ENCODE measurements at regions of chr1 and their contacts with region 1.

Region 1: GRCh38 chr1:230839173-230839572 is 29.1 kb downstream of the C1orf198 start:
- DNase-seq: no peak
- ATAC-seq: no peak

Region 2: DNA sequence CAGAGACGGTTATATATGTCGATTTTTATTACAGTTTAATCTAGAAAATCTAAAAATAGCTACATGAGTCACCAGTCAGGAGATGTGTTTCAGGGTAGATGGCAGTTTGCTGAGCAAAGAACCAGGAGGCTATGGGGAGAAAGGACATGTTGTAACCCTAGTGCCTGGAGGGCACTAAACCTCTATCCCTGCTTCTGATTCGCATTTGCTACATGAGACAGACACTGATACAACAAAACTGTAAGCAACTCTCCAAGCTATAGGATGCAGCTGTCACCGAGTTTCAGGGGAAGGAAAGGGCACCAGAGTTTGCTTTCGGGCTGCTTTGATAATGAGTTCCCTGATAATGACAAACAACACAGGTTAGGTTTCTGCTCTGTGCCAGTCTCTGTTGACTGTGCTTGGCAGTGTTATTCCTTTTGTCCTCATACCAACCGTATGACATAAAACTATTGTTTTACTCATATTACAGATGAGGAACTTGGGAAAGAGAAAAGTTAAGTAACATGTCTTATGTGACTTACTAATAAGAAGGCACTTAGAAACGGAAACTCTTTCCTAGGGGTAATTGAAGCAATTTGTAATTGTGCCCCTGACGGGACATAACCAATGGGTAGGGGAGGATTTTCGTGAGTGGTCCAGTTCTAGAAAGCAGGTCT is 14.0 kb before region 1 on chr1:
- intact Hi-C with region 1: loop called (anchors 1 kb)
- DNase-seq: no peak
- ATAC-seq: peak; percentile 55

Region 3: DNA sequence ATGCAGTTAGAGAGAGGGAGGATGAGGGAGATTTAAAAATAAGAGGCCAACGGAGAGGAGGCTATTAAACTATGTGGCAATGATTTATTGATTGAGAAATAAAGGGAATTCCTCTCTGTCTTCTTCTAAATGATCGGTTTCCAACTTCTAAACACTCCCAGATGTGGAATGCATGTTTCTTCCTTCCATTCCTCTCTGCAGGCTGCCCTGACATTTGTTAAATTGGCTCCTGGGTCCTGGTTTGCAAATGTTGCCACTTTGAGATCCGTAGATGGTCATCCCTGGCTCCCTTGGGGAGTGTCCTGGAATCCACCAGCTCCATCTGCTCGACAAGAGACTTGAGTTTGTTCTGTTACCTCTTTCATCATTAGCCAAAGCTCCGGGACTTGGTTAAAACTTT is 39.4 kb after region 1 on chr1:
- intact Hi-C with region 1: loop called (anchors 5 kb)
- DNase-seq: no peak
- ATAC-seq: peak; percentile 45

Region 4: GRCh38 chr1:230922620-230923019 is 83.4 kb after region 1 on chr1:
- intact Hi-C with region 1: no loop called
- DNase-seq: no peak
- ATAC-seq: no peak

Region 5: DNA sequence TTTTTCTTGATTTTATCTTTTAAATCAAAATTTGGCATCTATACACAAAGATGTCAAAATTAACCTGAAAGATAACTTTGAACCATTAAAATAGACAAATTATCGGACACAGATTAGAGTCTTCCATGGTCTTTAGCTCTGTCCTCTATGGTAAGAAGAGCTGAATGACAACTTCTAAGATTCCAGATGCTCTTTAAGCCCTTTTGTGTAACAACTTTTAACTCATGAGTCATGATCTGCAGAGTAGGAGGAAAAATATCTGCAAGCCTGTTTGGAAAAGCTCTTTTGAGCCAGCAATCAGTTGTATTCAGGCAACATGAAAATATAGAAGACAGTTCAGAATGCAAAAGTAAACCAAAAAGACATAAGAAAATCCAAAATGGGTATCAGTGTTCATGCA is 101.7 kb after region 1 on chr1:
- intact Hi-C with region 1: no loop called
- DNase-seq: no peak
- ATAC-seq: no peak